Activated B cell treated with CpG ODN at 0.5 μM for 24 hours (primary cell): ENCODE measurements at regions of chr12 and their contacts with region 1.

Region 1: DNA sequence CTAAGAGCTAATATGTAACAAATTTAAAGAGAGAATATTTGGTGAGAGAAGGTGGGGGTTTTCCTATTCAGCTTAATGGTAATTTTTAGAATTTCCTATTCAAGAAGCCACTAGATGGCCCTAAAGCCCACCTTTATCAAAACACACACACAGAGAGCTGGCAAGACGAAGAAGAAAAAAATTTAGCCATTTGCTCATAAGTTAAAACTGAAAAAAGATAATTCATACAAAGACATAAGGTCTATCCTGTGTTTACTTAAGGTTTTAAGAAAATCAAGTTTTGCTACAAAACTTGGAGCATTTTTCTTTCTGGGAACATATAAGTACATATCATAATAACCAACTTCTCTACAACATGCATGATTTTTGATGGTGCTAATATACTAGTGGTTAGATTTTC is 46.8 kb upstream of the PCED1B start:
- DNase-seq: no peak
- ATAC-seq: peak; percentile 81
- H3K4me3 Mint-ChIP-seq: no peak overlapping the region
- H3K27ac Mint-ChIP-seq: no peak overlapping the region
- H3K4me1 Mint-ChIP-seq: peaks cover 14% of the 10 kb centered on the region
- H3K27me3 Mint-ChIP-seq: no peaks in the 10 kb centered on the region
- CTCF ChIP-seq: peak; percentile 77

Region 2: DNA sequence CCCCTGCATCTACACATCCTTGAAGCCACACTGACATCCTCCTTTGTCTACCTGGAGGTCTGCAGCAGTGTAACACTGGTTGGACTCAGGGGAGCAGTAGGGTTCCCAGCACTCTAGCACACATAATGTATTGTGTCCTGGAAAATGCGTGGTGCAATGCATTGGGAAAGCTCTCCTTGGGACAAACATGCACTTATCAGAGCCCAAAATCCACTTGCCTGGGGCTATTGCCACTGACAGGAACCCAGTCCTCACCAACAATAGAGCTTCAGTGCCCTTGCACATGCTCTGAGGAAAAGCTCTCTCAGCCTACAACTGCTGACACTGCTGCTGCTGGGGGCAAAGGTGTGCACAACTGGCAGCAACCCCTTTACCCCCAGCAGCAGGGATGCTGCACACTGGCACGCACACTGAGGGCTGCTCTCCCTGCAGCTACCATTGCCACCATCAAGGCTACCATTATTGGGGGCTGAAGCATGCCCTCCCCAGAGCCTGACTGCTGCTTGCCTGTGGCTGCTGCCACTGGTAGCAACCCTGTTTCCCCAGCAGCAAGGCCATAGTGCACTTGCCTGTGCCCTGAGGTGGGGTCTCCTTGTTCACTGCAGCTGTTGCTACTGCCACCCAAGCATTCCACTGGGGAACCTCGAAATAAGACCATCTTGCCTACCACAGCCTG is 428.7 kb before region 1 on chr12:
- CTCF ChIA-PET with region 1: no interaction called
- POLR2A ChIA-PET with region 1: no interaction called
- intact Hi-C with region 1: no loop called
- DNase-seq: no peak
- ATAC-seq: no peak
- H3K4me3 Mint-ChIP-seq: no peak overlapping the region
- H3K27ac Mint-ChIP-seq: no peak overlapping the region
- H3K4me1 Mint-ChIP-seq: no peaks in the 10 kb centered on the region
- H3K27me3 Mint-ChIP-seq: no peaks in the 10 kb centered on the region
- CTCF ChIP-seq: no peak

Region 3: GRCh38 chr12:47071241-47071852 is 38.7 kb after region 1 on chr12:
- CTCF ChIA-PET with region 1: interaction called, 17 read pairs
- POLR2A ChIA-PET with region 1: no interaction called
- intact Hi-C with region 1: no loop called
- DNase-seq: no peak
- ATAC-seq: no peak
- H3K4me3 Mint-ChIP-seq: no peak overlapping the region
- H3K27ac Mint-ChIP-seq: no peak overlapping the region
- H3K4me1 Mint-ChIP-seq: no peaks in the 10 kb centered on the region
- H3K27me3 Mint-ChIP-seq: no peaks in the 10 kb centered on the region
- CTCF ChIP-seq: no peak

Region 4: DNA sequence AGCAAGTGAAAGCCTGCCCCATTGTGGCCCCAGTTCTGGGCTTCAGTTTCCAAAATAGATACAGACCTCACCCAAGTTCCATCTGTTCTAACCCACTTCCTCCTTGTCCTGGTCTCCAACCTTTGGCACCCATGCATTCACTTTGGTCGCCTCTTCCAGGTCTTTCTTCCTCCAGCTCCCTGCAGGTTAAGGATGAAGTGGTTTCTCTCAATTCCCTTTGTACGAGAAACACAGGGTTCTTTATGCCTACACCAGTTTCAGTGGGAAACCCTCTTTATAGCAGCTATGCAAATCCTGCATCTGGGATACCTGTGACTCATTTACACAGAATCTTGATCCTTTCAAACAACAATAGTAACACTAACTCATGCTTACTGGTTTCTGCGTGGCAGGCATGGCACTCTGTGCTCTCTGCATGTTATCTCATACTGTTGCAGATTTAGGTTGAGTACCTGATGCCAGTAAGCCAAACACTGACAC is 157.7 kb after region 1 on chr12:
- CTCF ChIA-PET with region 1: interaction called, 6 read pairs
- POLR2A ChIA-PET with region 1: no interaction called
- intact Hi-C with region 1: loop called (anchors 5 kb)
- DNase-seq: no peak
- ATAC-seq: peak; percentile 25
- H3K4me3 Mint-ChIP-seq: peak overlapping the region; percentile 45
- H3K27ac Mint-ChIP-seq: peak overlapping the region; percentile 86
- H3K4me1 Mint-ChIP-seq: peaks cover 75% of the 10 kb centered on the region
- H3K27me3 Mint-ChIP-seq: no peaks in the 10 kb centered on the region
- CTCF ChIP-seq: no peak

Region 5: GRCh38 chr12:47408171-47408871 is 375.7 kb after region 1 on chr12:
- CTCF ChIA-PET with region 1: interaction called, 66 read pairs
- POLR2A ChIA-PET with region 1: interaction called, 6 read pairs
- intact Hi-C with region 1: loop called (anchors 1 kb)
- DNase-seq: peak; percentile 46
- ATAC-seq: peak; percentile 97
- H3K4me3 Mint-ChIP-seq: no peak overlapping the region
- H3K27ac Mint-ChIP-seq: peak overlapping the region; percentile 63
- H3K4me1 Mint-ChIP-seq: peaks cover 28% of the 10 kb centered on the region
- H3K27me3 Mint-ChIP-seq: no peaks in the 10 kb centered on the region
- CTCF ChIP-seq: no peak

Region 6: GRCh38 chr12:47636908-47637780 is 604.5 kb after region 1 on chr12:
- CTCF ChIA-PET with region 1: interaction called, 15 read pairs
- POLR2A ChIA-PET with region 1: no interaction called
- intact Hi-C with region 1: no loop called
- DNase-seq: no peak
- ATAC-seq: no peak
- H3K4me3 Mint-ChIP-seq: no peak overlapping the region
- H3K27ac Mint-ChIP-seq: no peak overlapping the region
- H3K4me1 Mint-ChIP-seq: no peaks in the 10 kb centered on the region
- H3K27me3 Mint-ChIP-seq: no peaks in the 10 kb centered on the region
- CTCF ChIP-seq: no peak

Region 7: GRCh38 chr12:47686645-47687240 is 654.1 kb after region 1 on chr12:
- CTCF ChIA-PET with region 1: interaction called, 56 read pairs
- POLR2A ChIA-PET with region 1: interaction called, 7 read pairs
- intact Hi-C with region 1: loop called (anchors 1 kb)
- DNase-seq: no peak
- ATAC-seq: no peak
- H3K4me3 Mint-ChIP-seq: no peak overlapping the region
- H3K27ac Mint-ChIP-seq: no peak overlapping the region
- H3K4me1 Mint-ChIP-seq: peaks cover 8% of the 10 kb centered on the region
- H3K27me3 Mint-ChIP-seq: no peaks in the 10 kb centered on the region
- CTCF ChIP-seq: peak; percentile 21